Dendritic cell treated with granulocyte-macrophage colony-stimulating factor and Interleukin-4, amounts not matched to agents 40 ng/mL and 50 ng/mL, for 4 days (primary cell): ENCODE measurements at regions of chrX and their contacts with region 1.

Region 1: GRCh38 chrX:1477801-1478458 is 25.2 kb upstream of the ASMTL start:
- H3K4me3 Mint-ChIP-seq: no peak overlapping the region
- H3K27ac Mint-ChIP-seq: peak overlapping the region; percentile 2
- H3K4me1 Mint-ChIP-seq: peaks cover 47% of the 10 kb centered on the region
- H3K27me3 Mint-ChIP-seq: no peaks in the 10 kb centered on the region

Region 2: DNA sequence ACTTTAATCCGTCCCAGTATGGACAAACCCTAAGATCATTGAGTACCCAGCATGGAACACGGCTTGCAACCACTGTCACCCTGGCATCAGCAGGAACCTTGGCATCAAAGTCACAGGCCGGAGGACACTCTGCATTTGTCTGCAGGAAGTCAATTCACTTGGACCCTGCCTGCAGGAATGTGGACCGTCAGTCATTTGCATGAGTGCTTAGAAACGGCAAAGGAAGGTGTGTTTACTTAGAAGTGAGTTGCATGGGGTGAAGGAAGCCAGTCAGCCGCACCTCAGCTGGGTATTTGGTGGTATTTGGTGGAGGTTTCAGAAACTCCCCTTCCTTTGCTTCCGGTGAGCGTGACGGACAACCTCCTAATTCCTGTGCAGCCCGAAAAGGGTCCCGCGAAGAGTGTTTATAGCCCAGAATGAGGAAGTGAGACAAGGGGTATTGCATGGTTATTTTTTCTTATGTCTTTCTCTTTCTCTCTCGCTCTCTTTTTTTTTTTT is 43.6 kb after region 1 on chrX:
- intact Hi-C with region 1: loop called (anchors 5 kb)
- H3K4me3 Mint-ChIP-seq: peak overlapping the region; percentile 59
- H3K27ac Mint-ChIP-seq: peak overlapping the region; percentile 20
- H3K4me1 Mint-ChIP-seq: peaks cover 42% of the 10 kb centered on the region
- H3K27me3 Mint-ChIP-seq: no peaks in the 10 kb centered on the region